Heart right ventricle (tissue), 16 donors: ENCODE measurements at regions of chr17 and their contacts with region 1.

Region 1: DNA sequence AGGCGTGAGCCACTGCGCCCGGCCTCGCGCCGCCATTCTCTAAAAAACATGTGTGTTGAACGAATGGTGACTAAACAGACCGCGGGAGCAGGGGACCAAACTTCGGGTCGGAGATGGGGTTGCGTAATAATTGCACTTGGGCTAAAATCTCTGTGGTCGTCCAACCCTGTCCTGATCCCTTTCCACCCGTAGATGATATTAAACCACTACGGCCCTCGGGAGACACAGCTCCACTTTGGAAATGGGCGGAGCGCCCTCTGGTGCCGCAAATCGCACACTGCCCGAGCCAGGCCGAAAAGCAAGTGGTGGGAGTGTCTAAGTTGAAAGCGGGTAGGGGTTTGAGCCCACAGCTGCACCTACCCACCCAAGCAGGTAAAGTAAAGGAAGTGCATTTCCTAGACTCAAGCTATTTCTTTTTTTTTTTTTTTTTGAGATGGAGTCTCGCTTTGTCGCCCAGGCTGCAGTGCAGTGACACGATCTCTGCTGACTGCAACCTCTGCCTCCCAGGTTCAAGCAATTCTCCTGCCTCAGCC is 17.0 kb downstream of the CAVIN1 start:
- DNase-seq: peak; percentile 83 to 90
- ATAC-seq: peak; percentile 56 to 80 (median 68)
- H3K4me3 ChIP-seq: peak overlapping the region in 6 of 10 donors; percentile 16 to 25 (median 21)
- H3K27ac ChIP-seq: peak overlapping the region; percentile 19 to 100 (median 84)
- H3K4me1 ChIP-seq: peaks cover 40 to 93% (median 87%) of the 10 kb centered on the region in 9 donors
- H3K27me3 ChIP-seq: no peaks in the 10 kb centered on the region
- CTCF ChIP-seq: peak; percentile 79 to 91 (median 85)

Region 2: DNA sequence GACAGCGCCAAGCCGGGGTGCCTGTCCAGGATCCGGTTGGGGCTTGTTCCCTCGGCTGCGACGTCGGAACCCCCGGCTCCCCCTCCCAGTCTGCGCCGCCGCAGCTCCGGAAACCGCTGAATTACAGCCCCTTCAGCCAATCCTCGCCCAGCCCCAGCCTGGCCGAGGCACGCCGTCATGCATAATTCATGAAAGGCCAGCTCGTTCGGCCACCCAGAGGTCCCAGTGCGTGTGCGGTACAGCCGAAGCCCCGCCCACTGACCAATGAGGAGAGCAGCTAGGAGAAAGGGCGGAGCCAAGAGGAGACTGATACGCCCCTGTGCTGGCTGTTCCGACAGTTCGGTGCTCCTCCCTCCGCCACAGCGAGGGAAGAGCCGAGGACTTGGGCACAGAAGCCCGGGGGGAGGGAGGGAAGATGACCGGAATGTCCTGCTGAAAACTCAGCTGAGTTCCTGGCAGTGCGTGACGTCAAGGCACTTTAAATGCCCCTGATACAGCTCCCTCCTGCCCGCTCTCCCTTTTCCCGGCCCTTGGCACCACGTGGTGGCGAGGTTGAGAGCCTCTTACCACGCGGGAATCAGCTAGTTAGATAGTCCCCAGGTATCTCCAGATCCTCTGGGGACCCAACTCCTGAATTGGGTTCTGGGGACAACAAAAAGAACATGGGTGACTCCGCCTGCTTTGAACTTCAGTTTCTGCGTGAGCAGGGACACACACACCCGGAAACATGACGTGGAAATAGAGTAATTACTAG is 17.5 kb before region 1 on chr17 and contains the start of gene STAT3:
- intact Hi-C with region 1: loop called in 1 of 10 experiments (anchors 2 kb)
- DNase-seq: peak; percentile 100
- ATAC-seq: peak; percentile 95 to 99 (median 98)
- H3K4me3 ChIP-seq: peak within 1 kb of the TSS; percentile 67 to 100 (median 90)
- H3K27ac ChIP-seq: peak within 1 kb of the TSS; percentile 95 to 100 (median 100)
- H3K4me1 ChIP-seq: peaks cover 0 to 50% (median 35%) of the 10 kb centered on the region in 9 donors
- H3K27me3 ChIP-seq: no peaks in the 10 kb centered on the region
- CTCF ChIP-seq: peak in 3 of 9 donors; percentile 2 to 32 (median 26)
- total RNA-seq, gene STAT3: 87.2 to 398 (median 115) TPM

Region 3: GRCh38 chr17:42422958-42423712 is 17.1 kb after region 1 on chr17 and contains the start of gene CAVIN1:
- intact Hi-C with region 1: loop called in 2 of 10 experiments (anchors 2 kb)
- DNase-seq: peak; percentile 100
- ATAC-seq: peak; percentile 91 to 96 (median 92)
- H3K4me3 ChIP-seq: peak within 1 kb of the TSS; percentile 79 to 100 (median 96)
- H3K27ac ChIP-seq: peak within 1 kb of the TSS; percentile 95 to 100 (median 99)
- H3K4me1 ChIP-seq: peaks cover 6 to 64% (median 39%) of the 10 kb centered on the region in 9 donors
- H3K27me3 ChIP-seq: peaks cover 0 to 54% (median 0%) of the 10 kb centered on the region in 7 donors
- CTCF ChIP-seq: peak in 2 of 9 donors; percentile 19 to 21
- total RNA-seq, gene CAVIN1: 176 to 300 (median 241) TPM

Region 4: GRCh38 chr17:42459256-42459800 is 53.3 kb after region 1 on chr17:
- intact Hi-C with region 1: loop called in 1 of 10 experiments (anchors 10 kb)
- DNase-seq: peak; percentile 36 to 41
- ATAC-seq: peak; percentile 29 to 65 (median 46)
- H3K4me3 ChIP-seq: peak overlapping the region; percentile 39 to 87 (median 78)
- H3K27ac ChIP-seq: peak overlapping the region; percentile 73 to 96 (median 92)
- H3K4me1 ChIP-seq: peaks cover 2 to 69% (median 34%) of the 10 kb centered on the region in 9 donors
- H3K27me3 ChIP-seq: no peaks in the 10 kb centered on the region
- CTCF ChIP-seq: peak in 5 of 9 donors; percentile 7 to 49 (median 43)

Region 5: GRCh38 chr17:42527273-42527703 is 121.3 kb after region 1 on chr17:
- intact Hi-C with region 1: loop called in 1 of 10 experiments (anchors 10 kb)
- DNase-seq: peak in 1 of 2 donors; percentile 81
- ATAC-seq: peak; percentile 67 to 92 (median 81)
- H3K4me3 ChIP-seq: no peak overlapping the region
- H3K27ac ChIP-seq: peak overlapping the region in 8 of 10 donors; percentile 4 to 97 (median 70)
- H3K4me1 ChIP-seq: peaks cover 16 to 61% (median 40%) of the 10 kb centered on the region in 9 donors
- H3K27me3 ChIP-seq: no peaks in the 10 kb centered on the region
- CTCF ChIP-seq: peak; percentile 68 to 91 (median 86)